AG04449 (cell line): ENCODE measurements at regions of chr6 and their contacts with region 1.

Region 1: GRCh38 chr6:31197559-31198305 is 27.2 kb upstream of the POU5F1 start:
- DNase-seq: no peak
- H3K4me3 ChIP-seq: peak overlapping the region; percentile 72
- CTCF ChIP-seq: no peak

Region 2: GRCh38 chr6:30533460-30534294 is 664.1 kb before region 1 on chr6:
- CTCF ChIA-PET with region 1: no interaction called
- POLR2A ChIA-PET with region 1: no interaction called
- DNase-seq: no peak
- H3K4me3 ChIP-seq: no peak overlapping the region
- CTCF ChIP-seq: no peak

Region 3: GRCh38 chr6:30942338-30943060 is 255.2 kb before region 1 on chr6:
- CTCF ChIA-PET with region 1: no interaction called
- POLR2A ChIA-PET with region 1: no interaction called
- DNase-seq: peak; percentile 17
- H3K4me3 ChIP-seq: no peak overlapping the region
- CTCF ChIP-seq: peak; percentile 77

Region 4: DNA sequence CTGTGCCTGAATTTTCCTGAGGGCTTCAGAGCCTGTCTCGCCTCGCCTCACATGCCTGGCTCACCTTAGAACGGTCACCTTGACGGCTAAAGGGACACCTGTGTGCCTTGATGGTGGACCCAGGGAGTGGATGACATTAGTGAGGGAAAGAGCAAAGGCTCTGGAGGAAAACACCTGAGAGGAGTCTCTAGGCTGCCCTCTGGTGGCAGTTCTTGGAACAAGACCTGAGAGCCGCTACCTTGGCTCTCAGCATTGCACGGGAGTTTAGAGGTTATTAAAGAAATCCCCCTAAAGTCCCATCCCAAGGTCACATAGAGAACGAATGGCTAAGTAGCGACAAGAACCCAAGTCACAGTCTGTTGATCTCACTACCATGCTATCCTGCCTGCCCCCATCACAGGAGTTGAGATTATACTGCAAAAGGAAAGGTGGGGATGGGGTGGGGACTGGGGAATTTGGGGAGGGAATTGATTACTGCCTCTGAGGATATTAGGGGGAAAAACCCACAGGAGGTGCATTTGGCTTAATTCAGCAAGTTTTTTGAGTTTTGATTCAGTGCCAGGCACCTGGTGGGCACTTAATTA is 69.5 kb before region 1 on chr6:
- CTCF ChIA-PET with region 1: interaction called, 505 read pairs
- POLR2A ChIA-PET with region 1: interaction called, 3 read pairs
- DNase-seq: no peak
- H3K4me3 ChIP-seq: no peak overlapping the region
- CTCF ChIP-seq: peak; percentile 68

Region 5: DNA sequence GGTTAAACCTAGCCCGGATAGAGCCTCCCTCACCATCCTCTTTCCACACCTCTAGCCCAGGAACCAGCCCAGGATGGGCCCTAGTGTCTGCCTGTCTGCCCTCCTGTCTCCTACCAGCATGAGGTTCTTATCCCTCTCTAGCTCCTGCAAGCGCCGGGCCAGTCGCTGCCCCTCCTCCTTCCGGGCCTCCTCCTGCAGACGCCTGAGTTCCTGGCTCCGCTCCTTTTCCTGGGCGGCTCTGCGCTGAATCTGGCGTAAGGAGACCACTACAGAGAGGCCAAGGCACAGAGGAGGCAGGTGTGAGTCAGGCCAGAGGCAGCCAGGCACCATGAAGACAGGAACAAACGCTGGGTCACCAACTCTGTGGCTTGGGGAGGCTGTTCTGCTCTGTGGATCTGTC is 54.6 kb before region 1 on chr6:
- CTCF ChIA-PET with region 1: interaction called, 505 read pairs
- POLR2A ChIA-PET with region 1: no interaction called
- DNase-seq: no peak
- H3K4me3 ChIP-seq: no peak overlapping the region
- CTCF ChIP-seq: no peak

Region 6: GRCh38 chr6:31180502-31180901 is 17.2 kb before region 1 on chr6:
- CTCF ChIA-PET with region 1: interaction called, 30 read pairs
- POLR2A ChIA-PET with region 1: no interaction called
- DNase-seq: no peak
- H3K4me3 ChIP-seq: peak overlapping the region; percentile 53
- CTCF ChIP-seq: no peak

Region 7: GRCh38 chr6:31210123-31210522 is 12.4 kb after region 1 on chr6:
- CTCF ChIA-PET with region 1: interaction called, 20 read pairs
- POLR2A ChIA-PET with region 1: no interaction called
- DNase-seq: no peak
- H3K4me3 ChIP-seq: no peak overlapping the region
- CTCF ChIP-seq: no peak

Region 8: GRCh38 chr6:31366693-31367470 is 169.2 kb after region 1 on chr6:
- CTCF ChIA-PET with region 1: interaction called, 286 read pairs
- POLR2A ChIA-PET with region 1: interaction called, 5 read pairs
- DNase-seq: peak; percentile 42
- H3K4me3 ChIP-seq: peak overlapping the region; percentile 38
- CTCF ChIP-seq: peak; percentile 99

Region 9: GRCh38 chr6:31377029-31377428 is 179.3 kb after region 1 on chr6:
- CTCF ChIA-PET with region 1: interaction called, 286 read pairs
- POLR2A ChIA-PET with region 1: no interaction called
- DNase-seq: no peak
- H3K4me3 ChIP-seq: no peak overlapping the region
- CTCF ChIP-seq: no peak

Region 10: GRCh38 chr6:31525932-31526591 is 328.3 kb after region 1 on chr6:
- CTCF ChIA-PET with region 1: no interaction called
- POLR2A ChIA-PET with region 1: no interaction called
- DNase-seq: no peak
- H3K4me3 ChIP-seq: no peak overlapping the region
- CTCF ChIP-seq: no peak